ENCODE measurements at regions of chr6 and their contacts with region 1.

Region 1: GRCh38 chr6:45677381-45678284 is 299.9 kb upstream of the SUPT3H start:
- DNase-seq: peak; percentile 89
- H3K4me3 ChIP-seq: peak overlapping the region; percentile 46
- H3K27ac ChIP-seq: peak overlapping the region; percentile 76
- H3K4me1 ChIP-seq: peaks cover 42% of the 10 kb centered on the region
- CTCF ChIP-seq: no peak

Region 2: DNA sequence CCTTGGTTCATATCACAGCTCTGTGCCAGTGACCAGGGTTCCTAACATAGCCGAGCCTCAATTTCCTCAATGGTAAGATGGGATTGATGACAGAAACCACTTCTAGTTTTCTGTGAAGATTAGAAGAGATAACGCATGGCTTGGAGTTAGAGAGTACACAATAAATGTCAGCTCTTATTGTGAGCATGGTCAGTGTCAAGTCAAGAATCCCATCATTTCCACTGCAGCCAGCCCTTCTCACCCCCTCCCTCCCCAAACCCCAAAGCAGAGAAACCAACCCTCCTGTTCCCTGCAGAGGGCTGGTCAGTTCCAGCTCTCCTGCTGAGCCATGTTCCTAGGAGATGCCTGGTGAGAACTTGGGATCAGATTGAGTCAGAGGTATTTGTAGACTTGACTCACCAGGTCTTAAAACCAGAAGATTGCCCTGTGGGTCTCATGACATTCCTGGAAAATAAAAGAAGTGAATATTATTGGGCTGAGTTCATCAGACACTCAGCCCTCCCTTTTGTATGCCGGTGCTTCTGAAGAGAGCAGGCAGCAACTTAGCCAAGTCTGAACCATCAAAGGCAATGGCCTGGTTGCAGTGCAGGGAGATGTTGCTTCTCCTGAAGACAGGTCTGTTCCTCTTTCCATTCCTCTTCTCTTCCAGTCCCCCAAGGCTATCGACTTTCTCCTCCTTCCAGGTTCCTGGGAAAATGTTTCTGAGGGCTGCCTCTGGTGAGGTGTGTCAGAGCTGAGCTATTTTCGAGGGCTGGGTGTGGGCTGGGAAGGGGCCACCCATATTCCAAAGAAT is 21.8 kb before region 1 on chr6:
- CTCF ChIA-PET with region 1: no interaction called
- POLR2A ChIA-PET with region 1: interaction called, 10 read pairs
- intact Hi-C with region 1: loop called (anchors 2 kb)
- DNase-seq: no peak
- H3K4me3 ChIP-seq: no peak overlapping the region
- H3K27ac ChIP-seq: no peak overlapping the region
- H3K4me1 ChIP-seq: peaks cover 35% of the 10 kb centered on the region
- CTCF ChIP-seq: no peak

Region 3: DNA sequence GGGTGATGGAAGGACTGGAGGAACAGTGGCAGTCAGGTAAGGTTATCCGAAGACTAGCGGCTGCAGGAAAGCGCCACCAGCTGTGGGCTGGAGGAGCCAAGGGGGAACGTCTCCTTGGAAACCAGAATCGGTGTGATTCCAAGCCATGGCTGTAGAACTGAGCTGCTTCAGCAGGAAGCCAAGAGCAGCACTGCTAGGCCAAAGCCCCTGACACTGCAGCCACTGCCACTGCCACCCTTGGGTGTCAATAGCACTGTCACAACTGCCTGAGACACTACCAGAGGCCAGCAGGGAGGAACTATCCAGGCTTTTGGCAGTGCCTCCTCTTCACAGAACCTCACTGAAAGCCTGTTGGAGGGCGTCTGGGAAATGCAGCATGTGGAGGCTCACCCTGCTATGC is 10.3 kb before region 1 on chr6:
- CTCF ChIA-PET with region 1: interaction called, 3 read pairs
- POLR2A ChIA-PET with region 1: interaction called, 10 read pairs
- intact Hi-C with region 1: no loop called
- DNase-seq: no peak
- H3K4me3 ChIP-seq: no peak overlapping the region
- H3K27ac ChIP-seq: no peak overlapping the region
- H3K4me1 ChIP-seq: peaks cover 39% of the 10 kb centered on the region
- CTCF ChIP-seq: no peak